GM13977 (cell line): ENCODE measurements at regions of chr20 and their contacts with region 1.

Region 1: DNA sequence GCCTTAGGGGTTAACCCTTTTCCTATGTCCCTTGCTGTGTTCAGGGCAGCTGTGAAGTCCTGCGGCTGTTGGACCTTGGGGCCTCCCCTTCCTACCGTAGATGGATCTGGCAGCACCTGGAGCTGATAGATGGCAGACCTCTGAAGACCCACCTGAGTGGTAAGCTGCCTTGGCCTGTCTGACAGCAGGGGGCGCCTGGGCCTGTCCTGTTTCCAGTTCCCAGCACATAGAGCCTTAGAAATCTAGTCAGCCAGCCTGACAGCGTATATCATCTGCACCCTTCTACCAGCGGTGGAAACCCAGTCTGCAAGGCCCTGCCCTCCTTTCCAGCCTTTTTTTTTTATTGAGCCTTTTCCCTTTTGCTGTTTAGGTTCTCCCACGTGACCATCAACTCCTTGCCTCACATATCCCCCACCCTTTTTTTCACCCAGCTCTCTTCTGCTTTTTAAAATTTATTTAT is 26.6 kb downstream of the CNBD2 start:
- DNase-seq: peak; percentile 78
- CTCF ChIP-seq: peak; percentile 90

Region 2: GRCh38 chr20:36101192-36101591 is 106.2 kb after region 1 on chr20:
- in situ Hi-C with region 1: no loop called
- DNase-seq: no peak
- CTCF ChIP-seq: no peak

Region 3: DNA sequence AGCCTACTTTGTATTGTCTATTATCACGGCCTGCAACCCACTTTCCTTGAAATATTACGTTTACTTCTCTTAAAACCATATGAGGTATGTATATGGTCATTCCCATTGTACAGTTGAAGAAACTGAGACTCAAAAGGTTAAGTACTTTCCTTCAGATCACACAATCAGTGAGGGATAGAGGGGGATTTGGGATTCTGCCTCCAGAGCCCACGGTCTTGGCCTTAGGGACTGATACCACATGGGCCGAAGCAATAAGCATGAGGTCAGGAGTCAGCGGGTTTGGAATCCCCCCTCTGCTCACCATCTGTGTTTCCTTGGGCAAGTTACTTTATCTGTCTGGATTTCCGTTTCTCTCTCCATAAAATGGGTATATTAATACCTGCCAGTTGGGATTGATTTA is 140.1 kb after region 1 on chr20:
- in situ Hi-C with region 1: loop called (anchors 5 kb)
- DNase-seq: no peak
- CTCF ChIP-seq: no peak